H1 (cell line): ENCODE measurements at regions of chr6 and their contacts with region 1.

Region 1: GRCh38 chr6:110682460-110682853 is 132.8 kb downstream of the CDK19 start:
- DNase-seq: no peak
- H3K4me3 ChIP-seq: no peak overlapping the region
- H3K27ac ChIP-seq: no peak overlapping the region
- H3K4me1 ChIP-seq: no peaks in the 10 kb centered on the region
- H3K27me3 ChIP-seq: no peaks in the 10 kb centered on the region
- CTCF ChIP-seq: peak in 2 of 3 experiments; percentile 67 to 68; a peak in 3 of 4 replicates
- EP300 ChIP-seq: no peak
- POLR2A ChIP-seq: no peak
- RAD21 ChIP-seq: peak; percentile 90

Region 2: DNA sequence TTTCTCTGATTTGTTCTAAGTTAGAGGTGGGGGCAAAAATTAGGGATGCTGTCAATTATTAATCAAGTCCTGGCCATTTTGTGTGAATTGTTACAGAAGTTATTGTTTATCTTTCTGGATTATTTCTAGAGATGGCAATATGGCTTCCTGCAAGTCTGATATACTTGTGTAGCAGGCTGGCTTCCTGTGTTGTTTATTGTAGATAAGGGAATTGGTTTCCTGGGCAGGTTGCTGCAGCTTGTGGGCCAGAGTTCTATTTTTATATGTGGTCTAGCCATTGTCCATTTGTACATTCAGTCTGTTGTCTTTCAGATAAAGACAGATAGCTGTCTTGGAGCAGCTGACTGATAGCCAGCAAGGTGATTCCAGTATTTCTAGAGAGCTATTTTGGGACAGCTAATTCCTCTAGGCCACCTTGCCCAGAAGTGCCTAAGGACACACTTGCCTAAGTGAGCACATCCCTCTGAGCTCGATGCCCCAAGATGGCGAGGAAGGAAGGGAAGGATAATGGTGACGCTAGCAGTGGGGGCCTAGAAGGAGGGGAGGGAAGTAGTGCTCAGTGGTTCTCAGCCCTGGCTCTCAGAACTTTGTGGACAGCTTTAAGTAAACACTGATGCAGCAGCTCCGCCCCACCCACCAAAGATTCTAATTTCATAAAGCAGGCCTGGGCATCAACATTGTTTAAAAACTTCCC is 292.6 kb before region 1 on chr6:
- CTCF ChIA-PET with region 1: no interaction called
- POLR2A ChIA-PET with region 1: no interaction called
- DNase-seq: no peak
- H3K4me3 ChIP-seq: no peak overlapping the region
- H3K27ac ChIP-seq: no peak overlapping the region
- H3K4me1 ChIP-seq: peaks cover 0 to 1% (median 0%) of the 10 kb centered on the region in 4 experiments; a peak in 1 of 7 replicates
- H3K27me3 ChIP-seq: no peaks in the 10 kb centered on the region
- CTCF ChIP-seq: no peak
- EP300 ChIP-seq: no peak
- POLR2A ChIP-seq: no peak
- RAD21 ChIP-seq: no peak

Region 3: DNA sequence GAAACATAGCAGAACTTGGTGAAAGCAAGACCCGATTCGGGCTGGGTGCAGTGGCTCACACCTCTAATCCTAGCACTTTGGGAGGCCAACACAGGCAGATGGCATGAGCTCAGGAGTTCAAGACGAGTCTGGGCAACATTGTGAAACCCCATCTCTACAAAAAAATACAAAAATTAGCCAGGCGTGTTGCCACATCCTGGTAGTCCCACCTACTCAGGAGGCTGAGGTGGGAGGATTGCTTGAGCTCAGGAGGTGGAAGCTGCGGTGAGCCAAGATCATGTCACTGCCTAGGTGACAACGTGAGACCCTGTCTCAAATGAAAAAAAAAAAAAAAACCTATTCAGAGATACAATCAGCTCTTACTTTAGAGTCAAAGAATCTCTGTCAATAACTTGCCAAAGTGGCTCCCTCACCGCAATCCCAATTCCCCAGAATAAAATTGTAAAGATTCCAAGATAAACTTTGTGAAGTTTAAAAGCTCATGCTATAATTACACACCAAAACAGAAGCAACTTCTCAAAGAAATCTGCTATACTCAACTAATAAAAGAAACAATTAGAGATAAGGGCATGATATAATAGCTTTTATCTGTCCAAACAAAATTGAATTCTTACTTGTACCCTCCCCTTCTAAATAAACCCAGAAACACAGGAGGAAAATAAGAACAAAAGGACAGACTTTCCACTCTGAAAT is 99.2 kb after region 1 on chr6:
- CTCF ChIA-PET with region 1: no interaction called
- POLR2A ChIA-PET with region 1: no interaction called
- DNase-seq: no peak
- H3K4me3 ChIP-seq: no peak overlapping the region
- H3K27ac ChIP-seq: no peak overlapping the region
- H3K4me1 ChIP-seq: no peaks in the 10 kb centered on the region
- H3K27me3 ChIP-seq: no peaks in the 10 kb centered on the region
- CTCF ChIP-seq: no peak
- EP300 ChIP-seq: no peak
- POLR2A ChIP-seq: no peak
- RAD21 ChIP-seq: no peak

Region 4: DNA sequence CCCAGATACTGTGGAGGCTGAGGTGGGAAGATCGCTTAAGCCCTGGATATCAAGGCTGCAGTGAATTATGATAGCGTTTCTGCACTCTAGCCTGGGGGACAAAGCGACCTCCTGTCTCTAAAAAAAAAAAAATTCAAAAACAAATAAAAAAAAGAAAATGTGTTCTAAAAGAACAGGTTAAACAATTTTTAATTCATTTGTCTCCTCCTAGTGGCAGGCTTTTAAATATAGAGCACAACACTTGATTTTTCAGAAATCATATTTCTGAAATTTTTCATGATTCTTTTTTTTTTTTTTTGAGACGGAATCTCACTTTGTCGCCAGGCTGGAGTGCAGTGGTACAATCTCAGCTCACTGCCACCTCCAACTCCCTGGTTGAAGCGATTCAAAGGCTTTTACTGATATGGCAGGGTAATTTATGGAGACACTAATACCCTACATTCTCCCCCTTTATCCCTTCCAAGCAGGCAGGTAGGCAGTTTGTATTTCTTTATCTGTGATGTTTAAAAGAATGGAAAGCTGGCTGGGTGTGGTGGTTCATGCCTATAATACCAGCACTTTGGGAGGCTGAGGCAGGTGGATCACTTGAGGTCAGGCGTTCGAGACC is 267.3 kb after region 1 on chr6:
- CTCF ChIA-PET with region 1: interaction called, 10 read pairs
- POLR2A ChIA-PET with region 1: no interaction called
- DNase-seq: no peak
- H3K4me3 ChIP-seq: no peak overlapping the region
- H3K27ac ChIP-seq: no peak overlapping the region
- H3K4me1 ChIP-seq: no peaks in the 10 kb centered on the region
- H3K27me3 ChIP-seq: no peaks in the 10 kb centered on the region
- CTCF ChIP-seq: peak in 1 of 3 experiments; percentile 11; a peak in 1 of 4 replicates
- EP300 ChIP-seq: no peak
- POLR2A ChIP-seq: no peak
- RAD21 ChIP-seq: peak in 1 of 2 experiments; percentile 37; a peak in 3 of 4 replicates